GM18951 (cell line): ENCODE measurements at regions of chr11 and their contacts with region 1.

Region 1: GRCh38 chr11:72293910-72294615 is 50.1 kb upstream of the PHOX2A start:
- POLR2A ChIP-seq: no peak

Region 2: GRCh38 chr11:72405009-72405408 is 110.9 kb after region 1 on chr11:
- in situ Hi-C with region 1: loop called (anchors 10 kb)
- POLR2A ChIP-seq: no peak